Left cardiac atrium (tissue), 4 donors: ENCODE measurements at regions of chr20 and their contacts with region 1.

Region 1: GRCh38 chr20:32411955-32412706 is 54.0 kb downstream of the ASXL1 start:
- DNase-seq: no peak
- ATAC-seq: no peak

Region 2: GRCh38 chr20:32325706-32326503 is 86.2 kb before region 1 on chr20:
- intact Hi-C with region 1: no loop called
- DNase-seq: no peak
- ATAC-seq: peak in 1 of 2 donors; percentile 37

Region 3: GRCh38 chr20:32359633-32360332 is 52.3 kb before region 1 on chr20:
- intact Hi-C with region 1: loop called in 1 of 2 experiments (anchors 10 kb)
- DNase-seq: no peak
- ATAC-seq: no peak

Region 4: GRCh38 chr20:33192912-33193501 is 780.9 kb after region 1 on chr20:
- intact Hi-C with region 1: no loop called
- DNase-seq: no peak
- ATAC-seq: no peak